AG04449 (cell line): ENCODE measurements at regions of chr3 and their contacts with region 1.

Region 1: GRCh38 chr3:52123106-52123725 is 31.0 kb downstream of the POC1A start:
- DNase-seq: no peak
- H3K4me3 ChIP-seq: no peak overlapping the region
- CTCF ChIP-seq: peak; percentile 98

Region 2: GRCh38 chr3:51874889-51875288 is 248.3 kb before region 1 on chr3:
- CTCF ChIA-PET with region 1: no interaction called
- POLR2A ChIA-PET with region 1: no interaction called
- DNase-seq: no peak
- H3K4me3 ChIP-seq: no peak overlapping the region
- CTCF ChIP-seq: no peak

Region 3: DNA sequence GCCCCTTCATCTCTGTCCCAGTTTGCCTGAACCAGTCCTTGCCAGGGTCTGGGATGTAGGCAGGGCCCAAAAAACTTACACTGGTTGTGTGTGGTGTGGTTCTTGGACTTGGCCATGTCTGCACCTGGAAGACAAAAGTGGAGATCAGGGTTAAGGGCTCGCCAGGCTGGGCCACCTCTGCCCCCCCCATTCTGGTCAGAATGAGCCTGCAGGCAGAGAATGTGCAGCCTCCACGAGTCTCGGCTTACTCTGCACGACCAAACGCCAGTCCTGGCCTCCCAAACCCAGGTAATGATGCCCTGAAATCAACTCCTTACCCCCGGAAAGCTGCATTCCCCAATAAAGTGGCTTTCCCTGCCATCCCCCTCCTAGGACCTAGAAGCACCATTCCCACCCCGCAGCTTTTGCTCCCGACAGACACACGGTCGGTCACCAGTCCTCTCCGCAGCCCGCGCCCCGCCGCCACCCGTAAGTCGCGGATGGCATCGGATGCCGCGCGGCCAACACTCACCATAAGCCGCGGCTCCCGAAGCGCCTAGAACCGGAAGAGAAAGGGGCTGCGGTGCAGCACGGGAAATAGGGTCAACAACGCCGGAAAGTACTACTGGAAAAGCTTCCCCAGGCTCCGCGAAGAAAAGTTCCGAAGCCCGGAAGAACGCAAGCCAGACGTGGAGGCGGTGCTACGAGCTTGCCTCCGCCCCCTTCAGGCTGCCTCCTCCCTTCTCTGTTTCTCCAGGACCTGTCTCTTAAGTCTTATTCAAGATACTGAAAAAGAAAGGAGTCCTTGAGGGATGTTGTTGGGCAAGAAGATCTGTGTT is 127.7 kb before region 1 on chr3 and contains the start of gene RPL29:
- CTCF ChIA-PET with region 1: interaction called, 779 read pairs
- POLR2A ChIA-PET with region 1: no interaction called
- DNase-seq: peak; percentile 63
- H3K4me3 ChIP-seq: peak within 1 kb of the TSS; percentile 92
- CTCF ChIP-seq: no peak

Region 4: GRCh38 chr3:52056968-52057805 is 66.0 kb before region 1 on chr3:
- CTCF ChIA-PET with region 1: interaction called, 45 read pairs
- POLR2A ChIA-PET with region 1: interaction called, 4 read pairs
- DNase-seq: peak; percentile 86
- H3K4me3 ChIP-seq: peak overlapping the region; percentile 72
- CTCF ChIP-seq: no peak

Region 5: GRCh38 chr3:52099001-52099401 is 24.2 kb before region 1 on chr3:
- CTCF ChIA-PET with region 1: interaction called, 22 read pairs
- POLR2A ChIA-PET with region 1: no interaction called
- DNase-seq: no peak
- H3K4me3 ChIP-seq: no peak overlapping the region
- CTCF ChIP-seq: no peak

Region 6: GRCh38 chr3:52136513-52136912 is 13.3 kb after region 1 on chr3:
- CTCF ChIA-PET with region 1: interaction called, 93 read pairs
- POLR2A ChIA-PET with region 1: no interaction called
- DNase-seq: no peak
- H3K4me3 ChIP-seq: no peak overlapping the region
- CTCF ChIP-seq: no peak

Region 7: GRCh38 chr3:52299879-52300611 is 176.8 kb after region 1 on chr3:
- CTCF ChIA-PET with region 1: no interaction called
- POLR2A ChIA-PET with region 1: no interaction called
- DNase-seq: no peak
- H3K4me3 ChIP-seq: no peak overlapping the region
- CTCF ChIP-seq: peak; percentile 22

Region 8: DNA sequence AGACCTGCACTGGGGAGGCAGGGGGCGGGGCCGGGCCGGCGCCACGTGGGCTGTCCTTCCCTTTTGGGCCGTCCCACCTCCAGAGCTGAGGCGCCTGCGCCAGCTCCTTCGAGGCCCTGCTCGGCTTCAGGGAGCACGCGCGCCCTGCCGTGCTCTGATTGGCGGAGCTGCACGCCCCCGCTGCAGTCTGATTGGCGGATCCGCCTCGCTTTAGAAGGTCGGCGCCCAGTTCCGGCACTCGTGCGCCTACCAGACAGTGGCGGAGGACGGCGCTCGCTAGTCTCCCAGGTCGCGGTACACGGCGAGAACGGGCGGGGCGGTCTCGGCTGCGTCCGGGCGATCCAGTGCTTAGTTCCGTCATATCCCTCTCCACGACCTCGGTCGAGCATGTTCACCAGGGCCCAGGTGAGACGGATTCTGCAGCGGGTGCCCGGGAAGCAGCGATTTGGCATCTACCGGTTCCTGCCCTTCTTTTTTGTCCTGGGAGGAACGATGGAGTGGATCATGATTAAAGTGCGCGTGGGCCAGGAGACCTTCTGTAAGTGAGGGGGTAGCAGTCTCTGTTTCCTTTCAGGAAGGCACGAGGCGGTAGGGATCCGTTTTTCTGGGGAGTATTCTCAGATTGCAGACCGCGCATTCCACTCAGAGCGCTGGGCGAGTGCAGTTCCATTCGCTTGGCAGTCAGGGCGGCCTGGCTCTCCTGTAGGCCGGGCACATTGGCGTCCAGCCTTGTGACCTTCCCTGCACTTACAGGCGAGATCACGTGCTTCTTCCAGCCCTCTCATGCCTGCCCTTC is 413.4 kb after region 1 on chr3 and contains the start of gene UQCC5:
- CTCF ChIA-PET with region 1: no interaction called
- POLR2A ChIA-PET with region 1: no interaction called
- DNase-seq: peak; percentile 87
- H3K4me3 ChIP-seq: peak within 1 kb of the TSS; percentile 91
- CTCF ChIP-seq: no peak